ENCODE measurements at regions of chr21 and their contacts with region 1.

Region 1: DNA sequence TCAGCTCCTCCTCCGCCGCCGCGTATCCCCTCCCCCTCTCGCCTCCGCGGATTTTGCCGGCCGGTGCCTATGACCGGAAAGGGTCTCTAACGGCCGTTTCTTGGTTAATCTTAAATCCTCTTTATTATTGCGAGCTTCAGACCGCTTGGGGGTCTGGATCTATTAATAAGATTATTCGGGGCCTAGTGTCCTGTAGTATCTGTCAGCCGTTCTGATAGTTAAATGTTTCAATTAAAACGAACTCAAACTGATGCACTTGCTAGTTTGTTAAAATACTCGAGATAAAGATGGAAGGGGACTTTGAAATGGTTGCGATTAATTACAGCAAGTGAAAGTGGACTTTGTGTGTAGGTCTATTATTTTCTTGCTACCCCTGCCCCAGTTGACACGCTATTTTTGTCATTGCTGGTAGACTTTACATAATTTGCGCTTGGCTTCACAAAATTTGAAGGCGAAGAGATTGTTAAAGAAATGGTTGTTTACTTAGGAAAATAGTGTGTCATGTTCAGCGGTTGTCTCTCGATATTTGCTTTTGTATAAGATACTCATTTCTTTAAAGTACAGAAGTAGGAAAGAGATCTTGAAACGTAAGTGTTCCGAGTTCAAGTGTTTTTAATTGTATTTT is 779 bp downstream of the SON start:
- DNase-seq: no peak
- H3K4me3 ChIP-seq: peak overlapping the region; percentile 76 to 100 (median 97)
- H3K27ac ChIP-seq: peak overlapping the region; percentile 100
- H3K4me1 ChIP-seq: peaks cover 19 to 40% (median 28%) of the 10 kb centered on the region in 4 experiments
- H3K27me3 ChIP-seq: no peaks in the 10 kb centered on the region

Region 2: DNA sequence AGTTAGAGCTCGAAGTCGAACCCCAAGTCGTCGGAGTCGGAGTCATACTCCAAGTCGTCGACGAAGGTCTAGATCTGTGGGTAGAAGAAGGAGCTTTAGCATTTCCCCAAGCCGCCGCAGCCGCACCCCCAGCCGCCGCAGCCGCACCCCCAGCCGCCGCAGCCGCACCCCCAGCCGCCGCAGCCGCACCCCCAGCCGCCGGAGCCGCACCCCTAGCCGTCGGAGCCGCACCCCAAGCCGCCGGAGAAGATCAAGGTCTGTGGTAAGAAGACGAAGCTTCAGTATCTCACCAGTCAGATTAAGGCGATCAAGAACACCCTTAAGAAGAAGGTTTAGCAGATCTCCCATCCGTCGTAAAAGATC is 11.3 kb after region 1 on chr21:
- CTCF ChIA-PET with region 1: interaction called, 16 read pairs
- POLR2A ChIA-PET with region 1: interaction called, 3 read pairs
- DNase-seq: no peak
- H3K4me3 ChIP-seq: no peak overlapping the region
- H3K27ac ChIP-seq: no peak overlapping the region
- H3K4me1 ChIP-seq: no peaks in the 10 kb centered on the region
- H3K27me3 ChIP-seq: no peaks in the 10 kb centered on the region

Measured in common myeloid progenitor, CD34-positive (primary cell).